Mammary epithelial cell (primary cell): ENCODE measurements at regions of chr13 and their contacts with region 1.

Region 1: GRCh38 chr13:38979891-38980749 is 10.5 kb downstream of the STOML3 start:
- DNase-seq: no peak
- H3K4me3 ChIP-seq: no peak overlapping the region
- H3K27ac ChIP-seq: no peak overlapping the region
- H3K4me1 ChIP-seq: no peaks in the 10 kb centered on the region
- H3K27me3 ChIP-seq: no peaks in the 10 kb centered on the region
- CTCF ChIP-seq: no peak

Region 2: DNA sequence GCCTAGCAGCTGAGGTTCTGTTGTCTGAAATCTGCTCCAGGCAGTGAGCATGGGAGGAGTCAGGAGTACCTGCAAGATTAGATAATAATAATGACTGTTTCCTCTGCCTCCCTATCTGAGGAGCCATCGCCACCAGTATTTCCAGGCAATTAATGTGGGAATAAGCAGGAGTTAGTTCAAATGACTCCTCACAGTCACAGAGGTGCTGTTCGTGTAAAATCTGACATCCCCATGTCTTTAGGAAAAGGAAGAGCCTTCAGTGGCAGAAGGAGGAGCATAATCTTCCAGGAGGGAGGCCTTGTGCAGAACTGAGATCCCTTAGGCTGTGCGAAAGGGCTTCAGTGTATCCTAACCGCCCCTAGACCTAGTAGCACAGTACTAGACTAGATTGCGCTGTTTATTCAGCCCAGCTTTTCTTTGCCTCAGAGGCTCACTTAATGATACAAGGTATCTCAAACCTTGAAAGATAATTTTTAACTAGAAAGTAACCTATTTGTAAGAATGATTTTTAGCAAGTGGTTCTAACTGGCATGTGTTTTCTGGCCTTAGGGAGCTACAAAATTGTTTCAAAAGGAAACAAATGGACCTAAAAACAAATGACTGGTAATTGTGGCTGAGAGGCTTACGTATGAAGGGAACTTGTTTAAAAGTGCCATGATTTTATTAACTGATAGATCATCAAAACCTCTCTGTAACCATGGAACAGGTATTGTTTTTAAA is 244.2 kb before region 1 on chr13:
- CTCF ChIA-PET with region 1: no interaction called
- dilution Hi-C with region 1: no loop called
- in situ Hi-C with region 1: no loop called
- intact Hi-C with region 1: no loop called
- DNase-seq: no peak
- H3K4me3 ChIP-seq: no peak overlapping the region
- H3K27ac ChIP-seq: no peak overlapping the region
- H3K4me1 ChIP-seq: no peaks in the 10 kb centered on the region
- H3K27me3 ChIP-seq: no peaks in the 10 kb centered on the region
- CTCF ChIP-seq: no peak

Region 3: DNA sequence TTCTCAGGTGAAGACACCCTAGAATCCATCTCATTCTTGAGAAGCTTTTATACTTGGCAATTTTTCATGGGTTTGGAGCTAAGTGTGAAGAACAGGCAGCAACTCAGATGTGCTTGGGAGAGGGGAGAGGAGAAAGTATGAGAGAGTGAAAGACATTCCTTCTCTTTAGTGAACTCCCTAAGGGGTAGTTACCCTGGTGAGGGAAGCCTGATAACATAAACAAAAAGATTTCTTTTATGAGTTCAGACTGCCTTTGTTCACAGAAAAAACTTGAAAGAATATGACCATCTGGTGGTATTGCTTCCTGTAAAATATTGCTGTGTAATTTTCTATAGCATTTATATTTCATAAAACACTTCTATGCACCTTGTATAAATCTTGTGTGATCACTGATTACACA is 10.6 kb after region 1 on chr13 and contains the start of gene STOML3:
- CTCF ChIA-PET with region 1: interaction called, 12 read pairs
- dilution Hi-C with region 1: no loop called
- in situ Hi-C with region 1: no loop called
- intact Hi-C with region 1: no loop called
- DNase-seq: no peak
- H3K4me3 ChIP-seq: no peak within 1 kb of the TSS
- H3K27ac ChIP-seq: no peak within 1 kb of the TSS
- H3K4me1 ChIP-seq: no peaks in the 10 kb centered on the region
- H3K27me3 ChIP-seq: no peaks in the 10 kb centered on the region
- CTCF ChIP-seq: no peak
- total RNA-seq, gene STOML3: not detected

Region 4: GRCh38 chr13:39284801-39285388 is 304.8 kb after region 1 on chr13:
- CTCF ChIA-PET with region 1: no interaction called
- dilution Hi-C with region 1: no loop called
- in situ Hi-C with region 1: no loop called
- intact Hi-C with region 1: no loop called
- DNase-seq: no peak
- H3K4me3 ChIP-seq: no peak overlapping the region
- H3K27ac ChIP-seq: no peak overlapping the region
- H3K4me1 ChIP-seq: no peaks in the 10 kb centered on the region
- H3K27me3 ChIP-seq: no peaks in the 10 kb centered on the region
- CTCF ChIP-seq: no peak